Uterus (tissue), 4 donors: ENCODE measurements at regions of chr13 and their contacts with region 1.

Region 1: GRCh38 chr13:30114571-30115256 is 192.6 kb downstream of the KATNAL1 start:
- DNase-seq: peak; percentile 90 to 92
- H3K4me3 ChIP-seq: peak overlapping the region; percentile 36 to 48
- H3K27ac ChIP-seq: peak overlapping the region; percentile 89 to 91
- H3K4me1 ChIP-seq: peaks cover 5% of the 10 kb centered on the region in 2 donors
- H3K27me3 ChIP-seq: no peaks in the 10 kb centered on the region
- CTCF ChIP-seq: peak; percentile 85 to 95 (median 90)
- POLR2A ChIP-seq: peak in 1 of 2 donors; percentile 42

Region 2: DNA sequence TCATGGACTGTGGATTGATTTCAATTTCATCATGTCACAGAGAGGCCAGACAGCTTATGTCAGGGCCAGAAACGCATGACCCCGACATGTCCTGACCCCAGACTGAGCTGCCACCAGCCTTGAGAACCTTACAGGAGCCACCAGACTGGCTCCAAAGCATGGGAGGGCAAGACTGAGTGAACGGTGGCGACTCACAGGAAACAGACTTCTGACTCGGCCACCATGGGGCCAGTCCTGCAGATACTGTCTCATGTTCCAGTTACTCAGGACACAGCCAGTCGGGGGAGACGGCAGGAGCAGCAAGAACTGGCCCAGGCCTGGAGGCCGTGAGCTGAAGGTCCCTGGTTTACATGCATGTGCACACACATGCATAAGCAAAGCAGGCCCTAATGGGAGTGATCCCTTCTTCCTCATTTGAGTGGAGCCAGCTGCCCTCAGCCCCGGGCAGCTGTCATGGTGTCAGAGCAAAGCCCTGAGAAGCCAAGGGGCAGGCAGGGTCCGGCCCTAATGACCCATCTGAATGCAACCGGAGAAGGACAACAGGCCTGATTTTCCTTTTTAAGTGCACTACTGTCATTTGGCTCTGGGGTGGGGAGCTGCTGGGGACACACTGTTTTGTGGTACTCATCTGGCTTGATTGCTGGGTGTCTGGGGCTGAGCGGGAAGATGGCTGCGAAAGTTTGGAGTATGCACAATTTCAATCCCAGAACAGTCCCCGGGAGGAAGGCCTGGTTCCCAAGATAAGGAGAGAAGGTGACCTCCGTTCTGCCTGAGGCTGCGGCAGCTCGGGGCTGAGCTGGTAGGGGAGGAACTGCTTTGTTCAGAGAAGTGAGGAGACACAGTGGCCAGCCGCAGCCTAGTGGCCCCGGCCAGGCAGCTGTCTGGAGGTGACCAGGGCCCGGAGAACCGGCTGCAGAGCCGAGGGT is 601.1 kb before region 1 on chr13:
- intact Hi-C with region 1: loop called (anchors 10 kb)
- DNase-seq: no peak
- H3K4me3 ChIP-seq: no peak overlapping the region
- H3K27ac ChIP-seq: no peak overlapping the region
- H3K4me1 ChIP-seq: peaks cover 0 to 11% of the 10 kb centered on the region in 2 donors
- H3K27me3 ChIP-seq: no peaks in the 10 kb centered on the region
- CTCF ChIP-seq: no peak
- POLR2A ChIP-seq: no peak

Region 3: GRCh38 chr13:29595380-29596063 is 519.2 kb before region 1 on chr13 and contains the start of gene SLC7A1:
- intact Hi-C with region 1: loop called (anchors 10 kb)
- DNase-seq: peak; percentile 67 to 77
- H3K4me3 ChIP-seq: peak within 1 kb of the TSS; percentile 60 to 98
- H3K27ac ChIP-seq: peak within 1 kb of the TSS; percentile 89 to 98
- H3K4me1 ChIP-seq: no peaks in the 10 kb centered on the region
- H3K27me3 ChIP-seq: no peaks in the 10 kb centered on the region
- CTCF ChIP-seq: peak in 2 of 4 experiments; percentile 4 to 18
- POLR2A ChIP-seq: peak in 1 of 2 donors; percentile 42
- total RNA-seq, gene SLC7A1: 4.1 to 39.0 (median 10.8) TPM

Region 4: DNA sequence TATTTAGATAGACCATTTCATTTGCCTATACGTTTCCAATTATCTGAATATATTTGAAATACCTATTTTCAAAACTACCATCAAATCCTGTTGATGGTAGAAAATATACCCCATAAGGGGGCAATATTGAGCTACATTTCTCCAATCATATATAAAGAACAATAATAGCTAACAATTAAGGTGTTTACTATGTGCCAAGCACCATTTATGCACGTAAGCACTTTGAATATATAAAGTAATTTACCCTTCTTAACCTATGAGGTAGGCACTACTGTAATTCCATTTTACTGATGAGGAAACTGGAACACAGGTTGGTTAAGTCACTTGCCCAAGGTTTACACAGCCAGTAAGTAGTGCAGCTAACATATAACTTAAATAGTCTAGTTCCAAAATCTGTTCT is 343.5 kb before region 1 on chr13:
- intact Hi-C with region 1: loop called (anchors 10 kb)
- DNase-seq: no peak
- H3K4me3 ChIP-seq: no peak overlapping the region
- H3K27ac ChIP-seq: no peak overlapping the region
- H3K4me1 ChIP-seq: no peaks in the 10 kb centered on the region
- H3K27me3 ChIP-seq: no peaks in the 10 kb centered on the region
- CTCF ChIP-seq: peak; percentile 39 to 49 (median 47)
- POLR2A ChIP-seq: no peak

Region 5: GRCh38 chr13:29849731-29850223 is 264.9 kb before region 1 on chr13:
- intact Hi-C with region 1: loop called (anchors 5 kb)
- DNase-seq: peak; percentile 58 to 63
- H3K4me3 ChIP-seq: peak overlapping the region; percentile 69 to 72
- H3K27ac ChIP-seq: peak overlapping the region; percentile 99
- H3K4me1 ChIP-seq: peaks cover 0 to 5% of the 10 kb centered on the region in 2 donors
- H3K27me3 ChIP-seq: no peaks in the 10 kb centered on the region
- CTCF ChIP-seq: no peak
- POLR2A ChIP-seq: no peak

Region 6: DNA sequence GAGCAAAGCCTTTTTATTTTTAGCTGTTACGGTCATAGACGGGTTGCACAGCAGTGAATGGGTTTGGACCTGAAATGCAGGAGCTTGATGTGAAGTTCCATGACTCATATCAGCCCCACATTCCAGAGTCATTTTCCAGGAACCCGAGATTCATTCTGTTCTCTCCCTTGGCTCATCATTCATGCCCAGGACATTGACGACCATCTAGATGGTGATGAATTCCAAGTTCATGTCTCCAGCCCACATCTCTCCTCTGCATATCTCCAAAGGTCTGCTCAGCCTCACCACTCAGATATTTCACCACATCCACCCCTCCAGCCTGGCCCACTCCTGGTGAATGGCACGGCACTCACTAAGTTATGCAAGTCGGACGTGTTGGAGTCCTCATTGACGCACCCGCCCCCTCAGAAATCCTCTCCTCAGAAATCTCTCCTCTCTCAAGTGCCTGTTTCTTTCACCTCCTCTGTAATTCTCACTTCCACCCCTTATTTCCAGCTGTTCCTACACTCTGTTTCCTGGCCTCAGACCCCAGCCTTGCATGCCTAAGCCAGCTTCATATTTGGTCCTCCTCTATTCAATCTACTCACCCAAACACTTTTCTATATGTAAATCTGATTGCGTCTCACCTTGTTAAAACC is 703.7 kb after region 1 on chr13:
- intact Hi-C with region 1: no loop called
- DNase-seq: peak; percentile 76 to 78
- H3K4me3 ChIP-seq: no peak overlapping the region
- H3K27ac ChIP-seq: peak overlapping the region; percentile 61 to 75
- H3K4me1 ChIP-seq: no peaks in the 10 kb centered on the region
- H3K27me3 ChIP-seq: no peaks in the 10 kb centered on the region
- CTCF ChIP-seq: no peak
- POLR2A ChIP-seq: no peak